ENCODE measurements at regions of chr19 and their contacts with region 1.

Region 1: GRCh38 chr19:48308631-48309586 is 16.4 kb upstream of the EMP3 start:
- DNase-seq: no peak
- H3K4me3 Mint-ChIP-seq: no peak overlapping the region
- H3K27ac Mint-ChIP-seq: no peak overlapping the region
- H3K4me1 Mint-ChIP-seq: no peaks in the 10 kb centered on the region
- H3K27me3 Mint-ChIP-seq: peaks cover 6% of the 10 kb centered on the region

Region 2: GRCh38 chr19:48271531-48272151 is 37.3 kb before region 1 on chr19:
- intact Hi-C with region 1: no loop called
- DNase-seq: no peak
- H3K4me3 Mint-ChIP-seq: peak overlapping the region; percentile 81
- H3K27ac Mint-ChIP-seq: peak overlapping the region; percentile 23
- H3K4me1 Mint-ChIP-seq: peaks cover 13% of the 10 kb centered on the region
- H3K27me3 Mint-ChIP-seq: peaks cover 21% of the 10 kb centered on the region

Region 3: GRCh38 chr19:48333467-48334384 is 24.8 kb after region 1 on chr19:
- intact Hi-C with region 1: loop called (anchors 1 kb)
- DNase-seq: peak; percentile 92
- H3K4me3 Mint-ChIP-seq: peak overlapping the region; percentile 95
- H3K27ac Mint-ChIP-seq: peak overlapping the region; percentile 97
- H3K4me1 Mint-ChIP-seq: peaks cover 55% of the 10 kb centered on the region
- H3K27me3 Mint-ChIP-seq: peaks cover 1% of the 10 kb centered on the region

Region 4: DNA sequence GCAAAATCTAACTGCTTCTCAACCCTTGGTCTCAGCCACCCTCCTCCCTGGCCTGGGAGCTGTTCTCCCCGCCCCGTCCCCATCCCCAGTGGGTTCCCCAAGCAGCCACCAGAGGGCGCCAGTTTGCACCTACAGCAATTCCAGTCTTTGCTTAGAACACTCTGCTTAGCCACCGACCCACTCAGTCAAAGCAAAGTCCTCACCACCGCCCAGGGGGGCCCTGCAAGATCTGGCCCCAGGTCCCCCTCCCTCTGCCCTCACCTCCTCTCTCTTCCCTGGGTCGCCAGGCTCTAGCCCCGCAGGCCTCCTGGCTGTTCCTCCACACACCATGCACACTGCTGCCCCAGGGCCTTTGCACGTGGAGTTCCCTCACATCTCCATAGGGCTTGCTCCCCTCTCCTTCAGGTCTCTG is 42.4 kb after region 1 on chr19:
- intact Hi-C with region 1: loop called (anchors 1 kb)
- DNase-seq: peak; percentile 69
- H3K4me3 Mint-ChIP-seq: no peak overlapping the region
- H3K27ac Mint-ChIP-seq: no peak overlapping the region
- H3K4me1 Mint-ChIP-seq: peaks cover 5% of the 10 kb centered on the region
- H3K27me3 Mint-ChIP-seq: no peaks in the 10 kb centered on the region

Measured in activated T-helper 1 cell treated with anti-CD3 and anti-CD28 coated beads, Interleukin-12 subunit alpha, Interleukin-12 subunit beta, Interleukin-2, Interleukin-4 antibody, amounts not matched to agents 30 ng/mL and 10 ng/mL and 1 ng/mL, durations not matched to agents 14 hours and 24 hours and 36 hours (primary cell).